PC-3 (cell line): ENCODE measurements at regions of chr3 and their contacts with region 1.

Region 1: GRCh38 chr3:136267235-136267634 is 17.1 kb downstream of the PCCB start:
- DNase-seq: no peak
- ATAC-seq: no peak
- H3K4me3 ChIP-seq: no peak overlapping the region
- H3K27ac ChIP-seq: peak overlapping the region; percentile 72
- H3K4me1 ChIP-seq: peaks cover 9% of the 10 kb centered on the region
- H3K27me3 ChIP-seq: no peaks in the 10 kb centered on the region
- CTCF ChIP-seq: no peak

Region 2: DNA sequence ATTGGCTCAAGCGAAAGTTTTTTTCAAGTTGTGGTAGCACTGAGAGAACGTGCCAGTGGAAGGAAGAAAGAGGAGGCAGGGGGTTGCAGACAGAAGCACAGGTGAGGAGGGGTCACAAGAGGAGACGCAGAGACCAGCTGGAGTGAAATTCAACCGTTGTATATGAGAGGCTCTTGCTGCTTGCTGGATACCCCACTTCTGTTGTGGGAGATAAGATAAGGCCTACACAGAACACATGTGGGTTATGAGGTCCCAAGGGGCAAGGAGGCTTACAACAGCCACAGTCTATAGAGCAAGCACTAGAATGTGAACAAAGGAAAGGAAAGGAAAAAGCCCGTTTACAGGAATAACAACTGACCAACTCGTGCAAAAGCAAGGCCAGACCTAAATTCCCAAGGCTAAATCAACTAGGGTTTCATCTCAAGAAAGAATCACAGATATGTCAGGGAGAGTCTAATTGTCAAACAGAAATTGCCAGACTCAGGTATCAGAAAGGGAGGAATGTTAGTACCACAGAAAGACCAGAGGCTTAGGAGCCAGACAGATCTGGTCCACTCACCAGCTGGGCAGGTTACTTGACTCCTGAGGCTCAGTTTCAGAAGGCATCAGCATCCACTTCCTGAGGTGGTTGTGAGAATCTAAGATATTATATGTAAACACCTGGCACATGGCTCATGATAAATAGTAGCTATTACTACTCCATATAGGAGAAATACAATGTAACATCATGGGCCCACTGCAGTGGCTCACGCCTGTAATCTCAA is 132.0 kb before region 1 on chr3:
- CTCF ChIA-PET with region 1: no interaction called
- POLR2A ChIA-PET with region 1: no interaction called
- intact Hi-C with region 1: no loop called
- DNase-seq: no peak
- ATAC-seq: no peak
- H3K4me3 ChIP-seq: no peak overlapping the region
- H3K27ac ChIP-seq: no peak overlapping the region
- H3K4me1 ChIP-seq: no peaks in the 10 kb centered on the region
- H3K27me3 ChIP-seq: no peaks in the 10 kb centered on the region
- CTCF ChIP-seq: no peak

Region 3: DNA sequence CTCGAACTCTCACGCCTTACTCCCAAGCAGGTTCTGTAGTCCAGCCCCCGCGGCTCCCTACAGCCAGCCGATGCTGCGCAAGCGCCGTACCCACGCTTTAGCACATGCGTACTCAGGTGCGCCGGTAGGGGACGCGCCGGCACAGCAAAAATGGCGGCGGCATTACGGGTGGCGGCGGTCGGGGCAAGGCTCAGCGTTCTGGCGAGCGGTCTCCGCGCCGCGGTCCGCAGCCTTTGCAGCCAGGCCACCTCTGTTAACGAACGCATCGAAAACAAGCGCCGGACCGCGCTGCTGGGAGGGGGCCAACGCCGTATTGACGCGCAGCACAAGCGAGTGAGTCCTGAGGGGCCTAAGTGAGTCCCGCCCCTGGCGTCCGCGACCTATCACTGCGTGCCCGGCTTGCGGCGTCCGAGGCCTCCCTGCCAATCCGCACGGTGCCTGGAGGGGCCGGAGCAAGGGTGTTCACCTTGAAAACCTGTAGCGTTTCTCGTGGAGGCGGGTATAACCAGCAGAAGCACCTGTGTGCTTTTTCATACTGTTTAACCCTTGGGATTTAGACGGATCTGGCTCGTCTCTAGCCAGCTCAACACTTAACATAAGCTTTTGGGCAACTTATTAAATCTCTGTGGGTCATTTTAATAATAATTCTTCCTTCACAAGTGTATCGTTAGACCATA is 16.9 kb before region 1 on chr3 and contains the start of gene PCCB:
- CTCF ChIA-PET with region 1: no interaction called
- POLR2A ChIA-PET with region 1: no interaction called
- intact Hi-C with region 1: loop called (anchors 2 kb)
- DNase-seq: peak; percentile 88
- ATAC-seq: peak; percentile 100
- H3K4me3 ChIP-seq: peak within 1 kb of the TSS; percentile 66
- H3K27ac ChIP-seq: peak within 1 kb of the TSS; percentile 81
- H3K4me1 ChIP-seq: peaks cover 13% of the 10 kb centered on the region
- H3K27me3 ChIP-seq: no peaks in the 10 kb centered on the region
- CTCF ChIP-seq: peak; percentile 57
- total RNA-seq, gene PCCB: 53.5 and 58.2 TPM in 2 replicates